GM12878 (cell line): ENCODE measurements at regions of chr7 and their contacts with region 1.

Region 1: DNA sequence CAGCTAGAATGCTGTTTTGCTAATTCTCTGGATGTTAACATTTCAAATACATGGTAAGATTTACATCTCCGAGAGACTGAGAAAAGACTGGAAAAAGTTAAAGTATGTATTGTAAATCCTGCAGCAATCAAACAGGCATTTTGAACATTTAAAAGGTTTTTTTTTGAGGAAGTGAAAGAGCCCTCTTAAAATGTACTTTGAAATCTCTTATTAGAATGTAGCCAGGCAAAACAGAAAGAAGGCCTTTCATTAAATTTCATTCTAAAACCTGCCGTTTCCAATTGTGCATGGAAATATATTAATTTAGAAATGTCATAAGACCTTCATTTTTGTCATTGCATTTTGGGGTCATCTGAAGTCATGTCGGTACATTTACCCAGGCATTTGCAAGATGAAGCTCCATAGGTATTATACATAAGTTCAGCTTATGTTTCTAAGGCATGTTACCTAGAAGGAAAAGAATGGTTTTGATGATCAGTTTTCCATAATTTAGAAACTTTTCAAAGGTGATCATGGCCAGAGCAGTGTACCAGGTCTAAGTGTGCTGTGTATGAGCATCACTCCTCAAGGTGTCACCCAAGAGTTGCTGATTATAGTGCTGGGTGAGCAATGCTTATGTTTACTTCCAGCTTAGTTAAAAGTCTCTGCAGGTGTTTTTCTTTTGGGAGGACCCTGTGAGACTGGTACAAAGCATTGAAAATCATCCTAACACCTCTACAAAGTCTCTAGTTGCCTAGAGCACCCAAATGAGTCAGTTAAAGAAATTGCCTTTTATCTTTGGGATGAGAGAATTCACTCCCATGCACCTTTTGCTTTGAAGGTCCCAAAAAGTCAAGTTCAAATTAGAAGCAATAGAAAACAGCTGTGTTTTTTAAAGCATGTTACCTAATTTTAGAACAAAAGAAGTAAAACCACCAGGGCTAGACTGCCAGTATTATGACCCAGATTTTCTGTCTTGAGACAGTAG is 7.1 kb downstream of the ZNF736 start:
- DNase-seq: no peak
- ATAC-seq: peak; percentile 75
- H3K4me3 ChIP-seq: no peak overlapping the region
- H3K27ac ChIP-seq: no peak overlapping the region
- H3K4me1 ChIP-seq: no peaks in the 10 kb centered on the region
- H3K27me3 ChIP-seq: no peaks in the 10 kb centered on the region
- CTCF ChIP-seq: no peak
- EP300 ChIP-seq: peak in 1 of 2 experiments; percentile 6; a peak in 1 of 4 replicates
- POLR2A ChIP-seq: no peak
- RAD21 ChIP-seq: 0 out of 2 replicates have a peak, but pooled peaks have one; percentile 32

Region 2: GRCh38 chr7:64515330-64515729 is 194.5 kb after region 1 on chr7:
- CTCF ChIA-PET with region 1: no interaction called
- POLR2A ChIA-PET with region 1: no interaction called
- RAD21 ChIA-PET with region 1: no interaction called
- SMC1A ChIA-PET with region 1: no interaction called
- in situ Hi-C with region 1: no loop called
- intact Hi-C with region 1: loop called (anchors 10 kb)
- DNase-seq: no peak
- ATAC-seq: no peak
- H3K4me3 ChIP-seq: no peak overlapping the region
- H3K27ac ChIP-seq: no peak overlapping the region
- H3K4me1 ChIP-seq: no peaks in the 10 kb centered on the region
- H3K27me3 ChIP-seq: no peaks in the 10 kb centered on the region
- CTCF ChIP-seq: no peak
- EP300 ChIP-seq: no peak
- POLR2A ChIP-seq: no peak
- RAD21 ChIP-seq: no peak

Region 3: DNA sequence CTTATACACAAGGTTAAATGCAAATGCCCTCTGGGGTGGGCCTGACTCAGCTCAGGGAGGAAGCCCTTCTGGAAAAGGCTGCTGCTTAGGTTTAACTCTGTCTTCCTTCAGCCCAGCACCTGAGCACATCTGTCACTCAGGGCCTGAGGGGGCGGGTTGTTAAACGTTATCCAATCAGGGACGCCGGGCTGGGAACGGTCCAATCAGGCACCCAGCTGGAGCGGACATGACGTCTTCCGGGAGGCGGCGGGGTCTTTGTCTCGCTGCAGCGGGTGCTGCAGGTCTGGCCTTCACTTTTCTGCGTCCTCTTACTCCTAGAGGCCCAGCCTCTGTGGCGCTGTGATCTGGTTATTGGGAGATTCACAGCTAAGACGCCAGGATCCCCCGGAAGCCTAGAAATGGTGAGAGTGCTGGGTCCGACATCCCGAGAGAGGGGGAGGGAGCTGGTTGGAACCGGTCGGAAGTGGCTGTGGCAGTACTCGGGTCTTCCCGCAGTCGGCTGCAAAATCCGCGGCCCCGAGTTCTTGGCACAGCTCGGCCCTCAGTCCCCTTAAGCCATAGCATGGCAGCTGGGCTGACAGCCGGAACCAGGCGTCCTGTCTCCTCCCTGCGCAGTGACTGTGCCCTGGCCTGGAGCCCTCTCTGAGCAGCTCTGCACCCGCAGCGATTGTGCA is 473.5 kb after region 1 on chr7 and contains the start of gene ZNF138:
- CTCF ChIA-PET with region 1: no interaction called
- POLR2A ChIA-PET with region 1: no interaction called
- RAD21 ChIA-PET with region 1: no interaction called
- SMC1A ChIA-PET with region 1: interaction called, 4 read pairs
- in situ Hi-C with region 1: no loop called
- intact Hi-C with region 1: loop called (anchors 10 kb)
- DNase-seq: peak; percentile 84
- ATAC-seq: peak; percentile 100
- H3K4me3 ChIP-seq: peak within 1 kb of the TSS; percentile 88
- H3K27ac ChIP-seq: peak within 1 kb of the TSS; percentile 92
- H3K4me1 ChIP-seq: no peaks in the 10 kb centered on the region
- H3K27me3 ChIP-seq: no peaks in the 10 kb centered on the region
- CTCF ChIP-seq: no peak
- EP300 ChIP-seq: no peak
- POLR2A ChIP-seq: peak; percentile 90
- RAD21 ChIP-seq: no peak
- polyA plus RNA-seq, gene ZNF138: 8.6 to 11.0 TPM